ENCODE measurements at regions of chr12 and their contacts with region 1.

Region 1: DNA sequence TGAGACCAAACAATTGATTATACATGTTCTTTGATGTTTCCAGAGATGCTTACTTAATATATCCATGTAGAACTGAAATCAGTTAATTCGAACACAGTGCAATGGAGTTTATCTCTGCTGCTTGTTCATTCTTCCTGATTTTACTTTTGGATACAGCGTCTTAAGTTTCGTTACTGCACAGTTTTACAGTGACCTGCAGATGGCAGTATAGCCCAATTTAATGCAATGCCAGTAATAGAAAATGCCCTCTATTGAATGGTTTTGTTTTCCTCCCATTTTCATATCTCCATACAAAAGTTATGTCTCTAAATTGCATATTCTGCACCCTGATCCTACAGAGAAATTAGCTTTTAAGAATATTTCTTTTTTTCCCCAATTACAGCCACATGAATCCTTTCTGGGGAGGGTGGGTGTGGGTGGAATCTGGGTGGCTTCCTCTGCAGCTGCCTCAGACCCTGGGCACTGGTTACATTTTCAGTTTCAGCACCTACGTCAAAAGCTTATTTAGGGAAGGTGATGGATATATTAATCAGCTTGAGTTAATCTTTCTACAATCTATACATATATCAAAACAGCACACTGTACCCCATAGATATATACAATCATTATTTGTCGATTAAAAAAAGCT is 101.1 kb upstream of the DCD start:
- DNase-seq: no peak
- H3K4me3 ChIP-seq: no peak overlapping the region
- H3K27me3 ChIP-seq: no peaks in the 10 kb centered on the region
- CTCF ChIP-seq: peak; percentile 75

Region 2: DNA sequence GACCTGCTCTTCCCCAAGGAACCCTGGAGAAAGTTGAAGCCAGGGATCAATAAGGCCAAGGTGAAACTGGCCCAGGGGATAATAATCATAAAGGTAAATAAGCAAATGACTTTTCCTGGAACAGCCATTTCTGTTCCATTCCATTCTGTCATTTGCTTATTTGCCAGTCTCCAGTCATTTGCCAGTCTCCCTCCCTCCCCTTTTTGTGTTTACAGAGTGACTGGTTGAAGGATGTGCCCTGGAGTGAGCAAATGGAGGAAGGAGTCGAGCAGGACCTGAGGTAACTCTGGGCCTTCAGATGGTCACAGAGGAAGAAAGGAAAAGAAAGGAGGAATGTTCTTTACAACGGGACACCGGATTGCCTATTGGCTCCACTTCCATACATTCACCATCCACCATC is 83.3 kb before region 1 on chr12:
- CTCF ChIA-PET with region 1: no interaction called
- POLR2A ChIA-PET with region 1: no interaction called
- DNase-seq: no peak
- H3K4me3 ChIP-seq: no peak overlapping the region
- H3K27me3 ChIP-seq: no peaks in the 10 kb centered on the region
- CTCF ChIP-seq: no peak

Region 3: GRCh38 chr12:54759751-54760150 is 10.4 kb after region 1 on chr12:
- CTCF ChIA-PET with region 1: interaction called, 12 read pairs
- POLR2A ChIA-PET with region 1: no interaction called
- DNase-seq: no peak
- H3K4me3 ChIP-seq: no peak overlapping the region
- H3K27me3 ChIP-seq: no peaks in the 10 kb centered on the region
- CTCF ChIP-seq: peak; percentile 30; the same call in 1 of the 2 replicates

Region 4: DNA sequence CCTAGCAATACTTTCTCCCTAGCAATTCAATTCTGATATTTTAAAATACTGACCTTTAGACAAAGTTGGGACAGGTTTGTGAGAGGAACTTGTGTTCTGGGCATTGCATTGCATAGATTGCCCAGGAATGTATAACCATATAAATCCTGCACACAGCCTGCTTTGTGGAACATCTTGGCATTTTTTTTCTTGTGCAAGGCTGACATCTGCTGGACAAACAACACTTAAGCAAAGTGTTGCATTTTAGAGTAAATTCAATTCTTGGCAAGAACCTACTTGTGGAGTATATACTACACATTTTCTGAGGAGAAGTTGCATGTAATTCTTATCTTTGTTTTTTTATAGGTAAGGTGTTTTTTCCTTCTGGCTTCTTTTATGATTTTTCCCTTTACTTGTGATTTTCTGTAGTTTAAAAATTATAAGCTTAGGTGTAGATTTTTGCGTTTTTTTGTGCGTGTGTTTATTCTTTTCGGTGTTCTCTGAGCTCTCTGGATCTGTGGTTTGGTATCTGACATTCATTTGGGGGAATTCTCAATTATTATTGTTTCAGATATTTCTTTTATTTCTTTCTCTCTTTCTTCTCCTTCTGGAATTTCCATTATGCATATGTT is 208.8 kb after region 1 on chr12:
- CTCF ChIA-PET with region 1: interaction called, 25 read pairs
- POLR2A ChIA-PET with region 1: no interaction called
- DNase-seq: peak; percentile 9
- H3K4me3 ChIP-seq: no peak overlapping the region
- H3K27me3 ChIP-seq: no peaks in the 10 kb centered on the region
- CTCF ChIP-seq: peak; percentile 63

Region 5: DNA sequence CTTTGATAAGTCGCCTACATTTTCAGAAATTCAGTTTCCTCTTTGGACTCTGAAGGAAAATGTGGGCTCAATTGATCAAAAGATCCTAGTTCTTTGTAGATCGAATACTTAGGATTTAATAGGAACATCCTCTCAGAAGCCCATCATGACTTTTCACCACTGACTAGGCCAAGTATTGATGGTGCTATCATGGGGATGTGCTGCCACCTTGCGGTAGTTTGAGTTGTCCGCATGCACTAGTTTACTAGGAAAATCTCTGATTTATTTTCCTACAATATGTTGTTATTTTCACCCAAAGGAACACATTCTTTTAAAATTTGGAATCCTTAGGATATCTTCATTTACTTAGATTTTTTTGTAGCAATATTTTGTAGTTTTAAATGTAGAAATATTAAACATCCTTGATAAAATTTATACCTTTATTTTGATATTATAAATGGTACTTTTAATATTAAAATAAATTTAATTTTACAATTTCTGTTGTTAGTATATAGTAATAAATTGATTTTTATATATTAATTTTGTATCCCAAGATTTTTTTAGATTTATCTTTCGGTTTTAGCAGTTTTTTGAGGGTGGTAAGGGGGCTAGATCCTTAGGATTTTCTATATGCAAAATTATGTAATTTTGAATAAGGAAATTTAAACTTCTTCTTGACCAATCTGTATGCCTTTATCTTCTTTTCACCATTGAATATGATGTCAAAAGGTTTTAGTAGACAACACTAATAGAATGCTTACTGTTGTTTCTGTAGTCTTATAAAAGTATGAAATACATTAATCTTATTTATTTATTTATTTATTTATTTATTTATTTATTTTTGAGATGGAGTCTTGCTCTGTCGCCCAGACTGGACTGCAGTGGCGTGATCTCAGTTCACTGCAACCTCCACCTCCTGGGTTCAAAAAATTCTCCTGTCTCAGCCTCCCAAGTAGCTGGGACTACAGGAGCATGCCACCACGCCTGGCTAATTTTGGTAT is 324.0 kb after region 1 on chr12:
- CTCF ChIA-PET with region 1: interaction called, 11 read pairs
- POLR2A ChIA-PET with region 1: no interaction called
- DNase-seq: no peak
- H3K4me3 ChIP-seq: no peak overlapping the region
- H3K27me3 ChIP-seq: no peaks in the 10 kb centered on the region
- CTCF ChIP-seq: peak; percentile 88

Measured in BJ (cell line).